ENCODE measurements at regions of chr14 and their contacts with region 1.

Region 1: GRCh38 chr14:49852301-49853157 is at the start of gene NEMF:
- DNase-seq: peak; percentile 67 to 81 (median 78)
- ATAC-seq: peak; percentile 90
- H3K4me3 ChIP-seq: peak within 1 kb of the TSS; percentile 86
- H3K4me3 Mint-ChIP-seq: peak within 1 kb of the TSS; percentile 93 to 100 (median 96)
- H3K27ac ChIP-seq: peak within 1 kb of the TSS; percentile 87
- H3K27ac Mint-ChIP-seq: peak within 1 kb of the TSS; percentile 94 to 99 (median 97)
- H3K4me1 ChIP-seq: peaks cover 17 to 31% of the 10 kb centered on the region in 2 donors
- H3K4me1 Mint-ChIP-seq: peaks cover 26 to 49% (median 43%) of the 10 kb centered on the region in 7 donors
- H3K27me3 ChIP-seq: no peaks in the 10 kb centered on the region
- H3K27me3 Mint-ChIP-seq: no peaks in the 10 kb centered on the region
- total RNA-seq, gene NEMF: 88.6 to 127 (median 105) TPM

Region 2: DNA sequence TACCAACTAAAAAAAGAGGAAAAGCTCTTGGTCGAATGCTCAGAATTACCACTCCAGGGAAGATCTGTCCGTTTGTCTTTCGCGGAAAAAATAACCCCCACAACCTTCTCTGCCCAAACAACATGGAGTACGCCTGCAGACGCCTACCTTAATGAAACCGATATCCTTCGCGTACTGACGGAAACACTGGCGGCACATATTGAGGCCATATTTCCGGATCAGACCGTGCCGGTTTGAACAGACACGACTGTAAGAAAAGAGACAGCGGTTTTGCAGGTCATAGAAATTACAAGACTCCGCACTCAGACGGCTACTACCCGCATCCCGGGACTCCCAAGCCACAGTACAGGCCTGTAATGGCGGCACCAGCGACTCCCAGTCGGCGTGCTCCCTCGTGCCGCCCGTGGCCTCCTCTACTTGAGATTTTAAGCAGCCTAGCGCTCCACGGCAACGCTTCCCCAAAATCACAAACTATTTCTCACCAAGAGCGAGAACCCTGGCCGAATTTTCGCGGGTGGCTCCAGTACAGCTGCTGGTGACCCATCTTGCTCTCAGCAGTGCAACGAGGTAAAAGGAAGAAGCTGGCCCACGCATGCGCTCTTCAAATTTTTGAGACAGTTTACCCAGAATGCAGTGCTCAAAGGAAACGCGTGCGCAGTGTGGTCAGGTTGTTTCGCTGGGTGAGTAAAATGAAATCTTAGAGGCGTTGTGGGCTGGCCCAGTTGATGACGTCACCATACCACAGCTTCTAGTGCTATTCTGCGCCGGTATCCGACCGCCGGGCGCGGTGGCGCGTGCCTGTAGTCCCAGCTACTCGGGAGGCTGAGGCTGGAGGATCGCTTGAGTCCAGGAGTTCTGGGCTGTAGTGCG is 266.5 kb before region 1 on chr14 and contains the start of gene RPS29:
- CTCF ChIA-PET with region 1: interaction called, 5 read pairs
- POLR2A ChIA-PET with region 1: interaction called, 4 read pairs
- intact Hi-C with region 1: loop called in 1 of 2 experiments (anchors 2 kb)
- DNase-seq: peak; percentile 97 to 99 (median 99)
- ATAC-seq: peak; percentile 91
- H3K4me3 ChIP-seq: peak within 1 kb of the TSS; percentile 98
- H3K4me3 Mint-ChIP-seq: peak within 1 kb of the TSS; percentile 87 to 100 (median 94)
- H3K27ac ChIP-seq: peak within 1 kb of the TSS; percentile 84
- H3K27ac Mint-ChIP-seq: peak within 1 kb of the TSS; percentile 90 to 100 (median 98)
- H3K4me1 ChIP-seq: peaks cover 19 to 21% of the 10 kb centered on the region in 2 donors
- H3K4me1 Mint-ChIP-seq: peaks cover 33 to 60% (median 46%) of the 10 kb centered on the region in 7 donors
- H3K27me3 ChIP-seq: no peaks in the 10 kb centered on the region
- H3K27me3 Mint-ChIP-seq: peaks cover 0 to 5% (median 0%) of the 10 kb centered on the region in 5 donors
- total RNA-seq, gene RPS29: 2,254 to 4,907 (median 2,729) TPM

Region 3: GRCh38 chr14:49692811-49693734 is 159.5 kb before region 1 on chr14 and contains the start of gene KLHDC1:
- CTCF ChIA-PET with region 1: no interaction called
- POLR2A ChIA-PET with region 1: no interaction called
- intact Hi-C with region 1: loop called in 1 of 2 experiments (anchors 5 kb)
- DNase-seq: peak; percentile 70 to 84 (median 80)
- ATAC-seq: peak; percentile 89
- H3K4me3 ChIP-seq: peak within 1 kb of the TSS; percentile 67
- H3K4me3 Mint-ChIP-seq: peak within 1 kb of the TSS; percentile 81 to 100 (median 89)
- H3K27ac ChIP-seq: peak within 1 kb of the TSS; percentile 80
- H3K27ac Mint-ChIP-seq: peak within 1 kb of the TSS; percentile 79 to 99 (median 94)
- H3K4me1 ChIP-seq: peaks cover 8 to 19% of the 10 kb centered on the region in 2 donors
- H3K4me1 Mint-ChIP-seq: peaks cover 20 to 52% (median 43%) of the 10 kb centered on the region in 7 donors
- H3K27me3 ChIP-seq: no peaks in the 10 kb centered on the region
- H3K27me3 Mint-ChIP-seq: no peaks in the 10 kb centered on the region
- total RNA-seq, gene KLHDC1: 2.6 to 18.0 (median 12.2) TPM

Region 4: GRCh38 chr14:49828640-49829039 is 23.9 kb before region 1 on chr14:
- CTCF ChIA-PET with region 1: interaction called, 15 read pairs
- POLR2A ChIA-PET with region 1: interaction called, 4 read pairs
- intact Hi-C with region 1: loop called in 1 of 2 experiments (anchors 2 kb)
- DNase-seq: no peak
- ATAC-seq: no peak
- H3K4me3 ChIP-seq: no peak overlapping the region
- H3K4me3 Mint-ChIP-seq: no peak overlapping the region
- H3K27ac ChIP-seq: no peak overlapping the region
- H3K27ac Mint-ChIP-seq: peak overlapping the region in 1 of 9 donors; percentile 65
- H3K4me1 ChIP-seq: no peaks in the 10 kb centered on the region
- H3K4me1 Mint-ChIP-seq: peaks cover 0 to 24% (median 10%) of the 10 kb centered on the region in 7 donors
- H3K27me3 ChIP-seq: no peaks in the 10 kb centered on the region
- H3K27me3 Mint-ChIP-seq: no peaks in the 10 kb centered on the region

Region 5: DNA sequence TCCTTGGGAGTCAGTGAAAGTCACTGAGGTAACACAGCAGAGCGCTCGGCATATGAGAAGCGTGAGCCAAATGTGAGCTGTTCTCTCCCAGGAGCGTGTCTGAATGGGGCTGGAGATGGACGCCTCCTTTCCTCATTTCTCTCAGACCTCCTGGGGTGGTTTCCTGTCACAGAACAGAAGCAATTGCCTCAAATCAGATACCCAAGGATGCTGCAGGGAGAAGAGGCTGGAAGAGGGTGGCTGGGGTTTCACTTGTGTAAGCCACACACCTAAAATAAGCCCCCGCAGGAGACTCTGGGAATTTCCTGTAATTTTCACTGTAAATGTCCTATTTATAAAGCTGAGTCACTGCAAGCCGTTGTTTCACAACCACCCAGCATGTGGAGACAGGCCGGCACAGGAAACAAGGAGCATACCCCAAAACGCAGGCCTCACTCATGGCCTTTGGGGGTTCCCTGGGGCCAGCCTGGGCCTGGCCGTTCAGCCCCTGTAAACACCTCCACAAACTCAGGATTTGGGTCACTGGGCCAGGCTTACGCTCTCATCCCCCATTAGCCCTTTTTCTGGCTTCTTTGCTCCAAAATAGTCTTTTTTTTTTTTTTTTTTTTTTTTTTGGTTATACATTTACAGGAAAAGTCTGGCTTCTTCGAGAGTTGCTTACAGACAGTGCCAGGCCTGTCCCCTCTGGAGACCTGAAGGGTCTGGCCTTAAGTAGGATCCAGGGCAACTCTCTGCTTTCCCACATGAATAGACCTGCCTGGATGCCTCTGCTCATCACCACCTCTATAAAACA is 208.5 kb after region 1 on chr14:
- CTCF ChIA-PET with region 1: interaction called, 5 read pairs
- POLR2A ChIA-PET with region 1: interaction called, 9 read pairs
- intact Hi-C with region 1: loop called in 1 of 2 experiments (anchors 1 kb)
- DNase-seq: peak in 2 of 9 donors; percentile 27 to 61
- ATAC-seq: no peak
- H3K4me3 ChIP-seq: peak overlapping the region; percentile 53
- H3K4me3 Mint-ChIP-seq: peak overlapping the region; percentile 74 to 94 (median 89)
- H3K27ac ChIP-seq: peak overlapping the region; percentile 79
- H3K27ac Mint-ChIP-seq: peak overlapping the region; percentile 96 to 100 (median 99)
- H3K4me1 ChIP-seq: peaks cover 61 to 69% of the 10 kb centered on the region in 2 donors
- H3K4me1 Mint-ChIP-seq: peaks cover 70 to 93% (median 89%) of the 10 kb centered on the region in 7 donors
- H3K27me3 ChIP-seq: no peaks in the 10 kb centered on the region
- H3K27me3 Mint-ChIP-seq: no peaks in the 10 kb centered on the region

Region 6: GRCh38 chr14:50109342-50109741 is 256.8 kb after region 1 on chr14:
- CTCF ChIA-PET with region 1: interaction called, 21 read pairs
- POLR2A ChIA-PET with region 1: interaction called, 3 read pairs
- intact Hi-C with region 1: loop called (anchors 1 kb)
- DNase-seq: no peak
- ATAC-seq: no peak
- H3K4me3 ChIP-seq: no peak overlapping the region
- H3K4me3 Mint-ChIP-seq: no peak overlapping the region
- H3K27ac ChIP-seq: no peak overlapping the region
- H3K27ac Mint-ChIP-seq: no peak overlapping the region
- H3K4me1 ChIP-seq: peaks cover under 1 to 4% of the 10 kb centered on the region in 2 donors
- H3K4me1 Mint-ChIP-seq: peaks cover 0 to 21% (median 16%) of the 10 kb centered on the region in 7 donors
- H3K27me3 ChIP-seq: no peaks in the 10 kb centered on the region
- H3K27me3 Mint-ChIP-seq: no peaks in the 10 kb centered on the region

Region 7: DNA sequence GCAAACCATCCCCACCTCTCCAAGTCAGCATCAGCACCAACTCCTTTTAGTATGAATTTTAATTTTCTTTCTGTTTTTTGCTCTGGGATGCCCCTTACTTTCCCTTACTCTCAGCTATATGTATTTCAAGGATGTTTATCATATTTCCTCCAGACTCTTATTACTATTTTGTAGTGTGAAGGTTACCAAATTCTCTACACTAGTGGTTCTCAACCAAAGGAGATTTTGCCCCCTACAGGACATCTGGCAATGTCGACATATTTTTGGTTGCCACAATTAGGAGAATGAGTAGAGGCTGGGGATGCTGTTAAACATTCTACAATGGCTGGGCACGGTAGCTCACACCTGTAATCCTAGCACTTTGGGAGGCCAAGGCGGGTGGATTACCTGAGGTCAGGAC is 408.0 kb after region 1 on chr14:
- CTCF ChIA-PET with region 1: no interaction called
- POLR2A ChIA-PET with region 1: no interaction called
- intact Hi-C with region 1: loop called (anchors 1 to 2 kb)
- DNase-seq: peak in 7 of 9 donors; percentile 10 to 46 (median 26)
- ATAC-seq: peak; percentile 67
- H3K4me3 ChIP-seq: no peak overlapping the region
- H3K4me3 Mint-ChIP-seq: no peak overlapping the region
- H3K27ac ChIP-seq: no peak overlapping the region
- H3K27ac Mint-ChIP-seq: peak overlapping the region in 3 of 9 donors; percentile 4 to 16 (median 8)
- H3K4me1 ChIP-seq: no peaks in the 10 kb centered on the region
- H3K4me1 Mint-ChIP-seq: peaks cover 0 to 8% (median 0%) of the 10 kb centered on the region in 7 donors
- H3K27me3 ChIP-seq: no peaks in the 10 kb centered on the region
- H3K27me3 Mint-ChIP-seq: no peaks in the 10 kb centered on the region

Region 8: DNA sequence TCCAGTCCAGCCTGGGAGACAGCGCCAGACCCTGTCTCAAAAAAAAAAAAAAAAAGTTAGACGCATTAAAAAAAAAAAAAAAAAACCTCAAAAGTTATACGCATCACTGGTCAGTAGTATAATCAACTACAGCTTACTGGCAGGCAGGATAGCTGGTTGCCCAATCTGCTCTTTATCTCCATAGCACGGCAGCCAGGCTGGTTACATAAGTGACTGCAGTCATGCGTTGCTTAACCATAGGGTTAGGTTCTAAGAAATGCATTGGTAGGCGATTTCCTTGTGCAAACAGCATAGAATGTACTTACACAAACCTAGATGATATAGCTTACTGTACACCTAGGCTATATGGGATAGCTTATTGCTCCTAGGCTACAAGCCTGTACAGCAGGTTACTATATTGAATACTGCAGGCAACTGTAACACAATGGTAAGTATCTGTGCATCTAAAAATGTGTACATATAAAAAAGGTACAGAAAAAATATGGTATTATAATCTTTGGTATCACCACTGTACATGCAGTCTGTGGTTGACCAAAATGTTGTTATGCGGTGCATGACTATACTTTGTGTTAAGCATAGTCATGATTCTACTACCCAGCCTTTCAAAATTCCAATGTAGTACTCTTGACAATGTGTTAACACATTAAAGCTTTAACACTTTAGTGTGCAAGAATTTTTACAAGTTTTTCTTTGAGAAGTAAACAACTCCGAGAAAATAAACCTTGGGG is 451.4 kb after region 1 on chr14:
- CTCF ChIA-PET with region 1: no interaction called
- POLR2A ChIA-PET with region 1: no interaction called
- intact Hi-C with region 1: no loop called
- DNase-seq: no peak
- ATAC-seq: peak; percentile 83
- H3K4me3 ChIP-seq: no peak overlapping the region
- H3K4me3 Mint-ChIP-seq: no peak overlapping the region
- H3K27ac ChIP-seq: no peak overlapping the region
- H3K27ac Mint-ChIP-seq: no peak overlapping the region
- H3K4me1 ChIP-seq: no peaks in the 10 kb centered on the region
- H3K4me1 Mint-ChIP-seq: peaks cover 0 to 14% (median 3%) of the 10 kb centered on the region in 7 donors
- H3K27me3 ChIP-seq: no peaks in the 10 kb centered on the region
- H3K27me3 Mint-ChIP-seq: no peaks in the 10 kb centered on the region